Aorta (tissue), 5 donors: ENCODE measurements at regions of chr13 and their contacts with region 1.

Region 1: GRCh38 chr13:112942689-112943308 is 26.2 kb upstream of the MCF2L start:
- DNase-seq: peak; percentile 97 to 98
- ATAC-seq: peak; percentile 93
- H3K4me3 ChIP-seq: peak overlapping the region; percentile 27 to 41
- H3K27ac ChIP-seq: no peak overlapping the region
- H3K4me1 ChIP-seq: no peaks in the 10 kb centered on the region
- H3K27me3 ChIP-seq: no peaks in the 10 kb centered on the region

Region 2: GRCh38 chr13:112859817-112860190 is 83.0 kb before region 1 on chr13:
- intact Hi-C with region 1: no loop called
- DNase-seq: no peak
- ATAC-seq: no peak
- H3K4me3 ChIP-seq: no peak overlapping the region
- H3K27ac ChIP-seq: no peak overlapping the region
- H3K4me1 ChIP-seq: no peaks in the 10 kb centered on the region
- H3K27me3 ChIP-seq: no peaks in the 10 kb centered on the region

Region 3: GRCh38 chr13:113029487-113030258 is 86.9 kb after region 1 on chr13:
- intact Hi-C with region 1: loop called in 1 of 2 experiments (anchors 5 kb)
- DNase-seq: no peak
- ATAC-seq: no peak
- H3K4me3 ChIP-seq: no peak overlapping the region
- H3K27ac ChIP-seq: no peak overlapping the region
- H3K4me1 ChIP-seq: no peaks in the 10 kb centered on the region
- H3K27me3 ChIP-seq: no peaks in the 10 kb centered on the region